Right cardiac atrium (tissue), 5 donors: ENCODE measurements at regions of chr18 and their contacts with region 1.

Region 1: GRCh38 chr18:9614401-9615279 is at the start of gene PPP4R1:
- DNase-seq: peak; percentile 85 to 93 (median 91)
- ATAC-seq: peak; percentile 75 to 84
- H3K4me3 ChIP-seq: peak within 1 kb of the TSS; percentile 99
- H3K27ac ChIP-seq: peak within 1 kb of the TSS; percentile 98
- H3K4me1 ChIP-seq: peaks cover 3% of the 10 kb centered on the region
- H3K27me3 ChIP-seq: no peaks in the 10 kb centered on the region
- total RNA-seq, gene PPP4R1: 56.9 to 95.8 (median 65.3) TPM

Region 2: GRCh38 chr18:9961041-9961440 is 346.4 kb after region 1 on chr18:
- intact Hi-C with region 1: loop called in 1 of 4 experiments (anchors 10 kb)
- DNase-seq: no peak
- ATAC-seq: peak; percentile 42 to 56
- H3K4me3 ChIP-seq: no peak overlapping the region
- H3K27ac ChIP-seq: no peak overlapping the region
- H3K4me1 ChIP-seq: peaks cover 2% of the 10 kb centered on the region
- H3K27me3 ChIP-seq: no peaks in the 10 kb centered on the region